Mammary epithelial cell (primary cell): ENCODE measurements at regions of chr20 and their contacts with region 1.

Region 1: DNA sequence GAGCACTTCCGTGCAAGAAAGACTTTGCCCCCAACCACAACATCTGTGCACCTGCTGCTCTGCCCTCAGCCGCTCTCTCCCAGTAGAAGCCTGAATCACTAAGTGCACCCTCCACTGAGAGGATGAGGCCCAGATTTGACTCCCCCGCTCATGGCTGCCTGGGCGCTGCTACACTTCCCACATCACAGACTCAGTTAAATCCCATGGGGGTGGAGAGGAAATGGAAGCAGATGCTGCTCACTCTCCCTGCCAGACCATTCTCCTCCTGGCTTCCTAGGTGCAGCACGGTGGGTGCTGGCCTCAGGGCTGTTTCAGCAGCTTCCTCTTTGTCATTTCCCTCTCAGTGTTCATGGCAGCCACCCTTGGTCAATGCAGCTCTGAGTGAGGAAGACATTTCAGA is 4.8 kb downstream of the CST5 start:
- DNase-seq: no peak
- H3K4me3 ChIP-seq: no peak overlapping the region
- H3K27ac ChIP-seq: no peak overlapping the region
- H3K4me1 ChIP-seq: peaks cover 7% of the 10 kb centered on the region
- H3K27me3 ChIP-seq: no peaks in the 10 kb centered on the region
- CTCF ChIP-seq: no peak

Region 2: GRCh38 chr20:23225407-23226072 is 649.2 kb before region 1 on chr20:
- CTCF ChIA-PET with region 1: no interaction called
- dilution Hi-C with region 1: no loop called
- in situ Hi-C with region 1: no loop called
- intact Hi-C with region 1: no loop called
- DNase-seq: peak; percentile 89
- H3K4me3 ChIP-seq: no peak overlapping the region
- H3K27ac ChIP-seq: no peak overlapping the region
- H3K4me1 ChIP-seq: peaks cover 4% of the 10 kb centered on the region
- H3K27me3 ChIP-seq: no peaks in the 10 kb centered on the region
- CTCF ChIP-seq: no peak

Region 3: GRCh38 chr20:23970049-23970448 is 95.3 kb after region 1 on chr20:
- CTCF ChIA-PET with region 1: no interaction called
- dilution Hi-C with region 1: no loop called
- in situ Hi-C with region 1: loop called in 1 of 2 experiments (anchors 25 kb)
- intact Hi-C with region 1: no loop called
- DNase-seq: no peak
- H3K4me3 ChIP-seq: no peak overlapping the region
- H3K27ac ChIP-seq: no peak overlapping the region
- H3K4me1 ChIP-seq: no peaks in the 10 kb centered on the region
- H3K27me3 ChIP-seq: no peaks in the 10 kb centered on the region
- CTCF ChIP-seq: no peak

Region 4: GRCh38 chr20:24648481-24648880 is 773.7 kb after region 1 on chr20:
- CTCF ChIA-PET with region 1: no interaction called
- dilution Hi-C with region 1: no loop called
- in situ Hi-C with region 1: no loop called
- intact Hi-C with region 1: no loop called
- DNase-seq: no peak
- H3K4me3 ChIP-seq: no peak overlapping the region
- H3K27ac ChIP-seq: no peak overlapping the region
- H3K4me1 ChIP-seq: peaks cover 6% of the 10 kb centered on the region
- H3K27me3 ChIP-seq: no peaks in the 10 kb centered on the region
- CTCF ChIP-seq: no peak